Activated CD8-positive, alpha-beta T cell treated with anti-CD3 and anti-CD28 coated beads, Interleukin-2, amount 10 ng/mL, durations not matched to agents 7 days and 5 days (primary cell): ENCODE measurements at regions of chr18 and their contacts with region 1.

Region 1: DNA sequence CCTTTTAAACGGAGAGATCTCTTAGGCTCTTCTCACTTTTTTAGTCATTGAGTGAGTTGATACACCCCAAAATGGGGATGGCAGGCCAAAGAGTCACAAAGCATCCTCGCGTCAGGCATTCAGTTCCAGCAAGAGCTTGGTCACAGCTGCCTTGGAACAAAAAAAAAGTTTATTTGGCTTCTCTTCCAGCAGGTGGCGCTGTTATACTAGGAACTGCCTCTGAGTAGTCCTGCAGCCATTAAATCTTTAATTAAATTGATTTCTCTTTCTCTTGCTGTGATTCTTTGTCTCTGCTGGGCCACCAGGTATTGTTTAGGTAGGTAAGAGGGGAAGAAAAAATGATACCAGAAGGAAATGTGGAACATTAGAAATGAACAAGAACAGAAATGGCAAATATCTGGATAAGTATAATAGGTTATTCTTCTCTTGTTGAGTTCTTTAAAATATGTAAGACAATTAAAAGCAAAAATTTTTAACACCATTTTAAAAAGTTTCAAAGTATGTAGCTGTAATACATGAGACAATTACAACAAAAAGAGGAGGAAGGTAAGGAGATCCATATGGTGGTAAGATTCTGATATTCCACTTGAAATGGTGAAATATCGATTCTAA is 175.1 kb downstream of the GALNT1 start:
- DNase-seq: peak; percentile 72
- ATAC-seq: peak; percentile 85
- H3K4me3 Mint-ChIP-seq: no peak overlapping the region
- H3K27ac Mint-ChIP-seq: no peak overlapping the region
- H3K4me1 Mint-ChIP-seq: no peaks in the 10 kb centered on the region
- H3K27me3 Mint-ChIP-seq: peaks cover 19% of the 10 kb centered on the region

Region 2: DNA sequence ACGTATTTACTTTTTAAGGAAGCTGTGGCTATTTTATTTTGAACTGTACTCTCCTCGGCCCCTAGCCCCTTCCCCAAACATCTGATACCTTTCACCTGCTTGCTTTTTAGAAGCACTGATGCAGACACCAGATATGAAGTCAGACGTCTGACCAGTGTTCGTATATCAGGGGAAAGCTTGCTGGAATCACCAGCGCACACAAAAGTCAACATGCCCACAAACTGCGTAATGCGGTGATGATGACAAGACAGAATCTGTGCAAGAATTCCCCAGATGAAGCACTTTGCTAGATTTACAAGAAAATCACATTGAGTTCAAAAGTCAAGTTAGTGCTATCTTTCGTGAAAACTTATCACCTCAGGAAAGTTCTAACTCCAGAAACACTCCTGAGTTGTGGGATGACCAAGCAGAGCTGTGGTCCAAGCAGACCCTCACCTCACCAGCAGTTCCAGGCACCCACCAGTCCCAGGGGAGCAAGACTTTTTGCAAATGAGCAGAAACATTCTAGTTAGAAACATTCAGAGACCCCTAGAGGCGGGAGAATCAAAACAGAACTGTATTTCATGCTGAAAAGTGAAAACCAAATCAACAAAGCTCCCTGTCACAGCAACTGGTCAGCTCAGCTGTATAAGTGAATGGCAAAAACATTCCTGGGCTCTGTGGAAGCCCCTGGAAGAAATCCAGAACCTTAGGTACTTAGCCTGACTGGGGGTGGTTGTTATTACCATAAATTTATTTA is 314.6 kb before region 1 on chr18:
- CTCF ChIA-PET with region 1: no interaction called
- POLR2A ChIA-PET with region 1: no interaction called
- DNase-seq: no peak
- ATAC-seq: no peak
- H3K4me3 Mint-ChIP-seq: no peak overlapping the region
- H3K27ac Mint-ChIP-seq: no peak overlapping the region
- H3K4me1 Mint-ChIP-seq: peaks cover 6% of the 10 kb centered on the region
- H3K27me3 Mint-ChIP-seq: no peaks in the 10 kb centered on the region

Region 3: DNA sequence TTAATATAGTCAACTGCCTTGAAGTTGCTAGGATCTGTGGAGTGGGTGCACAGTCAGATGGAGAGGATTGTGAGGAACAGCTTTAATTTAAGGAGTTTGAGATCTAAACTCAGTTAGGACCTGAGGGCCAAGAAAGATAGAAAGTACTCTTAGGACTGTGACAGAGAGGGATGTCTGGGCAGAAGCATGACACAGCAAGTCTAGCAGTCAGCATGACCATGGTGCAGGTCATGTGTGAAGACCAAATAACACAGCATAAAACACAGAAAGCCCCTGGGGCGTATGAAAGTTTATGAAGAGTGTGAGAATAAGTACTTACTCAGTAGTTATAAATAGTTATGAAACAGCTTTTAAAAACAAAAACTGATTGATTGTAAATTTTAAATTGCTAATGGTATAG is 67.9 kb before region 1 on chr18:
- CTCF ChIA-PET with region 1: no interaction called
- POLR2A ChIA-PET with region 1: no interaction called
- DNase-seq: no peak
- ATAC-seq: no peak
- H3K4me3 Mint-ChIP-seq: no peak overlapping the region
- H3K27ac Mint-ChIP-seq: no peak overlapping the region
- H3K4me1 Mint-ChIP-seq: no peaks in the 10 kb centered on the region
- H3K27me3 Mint-ChIP-seq: no peaks in the 10 kb centered on the region

Region 4: DNA sequence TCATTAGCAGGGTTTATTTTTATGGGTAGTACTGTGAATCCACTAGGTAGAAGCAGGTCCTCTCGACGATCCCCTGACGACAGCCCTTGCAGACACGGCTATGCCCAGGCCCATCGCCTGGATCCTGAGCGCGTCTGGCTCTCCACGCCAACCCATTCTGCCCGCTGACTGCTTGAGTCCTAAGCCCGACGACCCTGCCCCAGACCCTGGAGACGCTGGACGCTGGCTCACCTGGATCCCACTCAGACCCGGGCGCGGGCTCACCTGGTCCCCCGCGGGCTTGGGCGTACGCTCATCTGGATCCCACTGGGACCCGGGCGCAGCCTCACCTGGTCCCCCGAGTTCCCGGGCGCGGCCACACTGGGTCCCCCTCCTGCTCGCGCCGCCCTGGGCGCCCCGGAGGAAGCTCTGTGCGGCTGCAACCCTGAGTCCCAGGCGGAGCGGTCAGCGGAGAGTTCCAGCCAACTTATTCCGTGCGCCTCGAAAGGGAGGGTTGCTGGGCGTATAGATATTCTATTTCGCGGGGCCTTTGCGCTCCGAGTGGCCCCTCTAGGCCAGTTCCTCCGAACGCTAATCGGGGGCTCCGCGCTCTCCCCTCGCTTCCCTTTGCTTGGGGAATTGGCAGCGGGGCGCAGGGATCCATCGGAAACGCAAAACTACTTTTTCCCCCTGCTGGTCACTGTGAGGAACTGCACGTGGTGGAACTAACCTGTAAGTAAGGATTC is 193.5 kb after region 1 on chr18:
- CTCF ChIA-PET with region 1: interaction called, 15 read pairs
- POLR2A ChIA-PET with region 1: no interaction called
- DNase-seq: peak; percentile 58
- ATAC-seq: peak; percentile 83
- H3K4me3 Mint-ChIP-seq: peak overlapping the region; percentile 72
- H3K27ac Mint-ChIP-seq: no peak overlapping the region
- H3K4me1 Mint-ChIP-seq: peaks cover 3% of the 10 kb centered on the region
- H3K27me3 Mint-ChIP-seq: peaks cover 8% of the 10 kb centered on the region